B cell (primary cell): ENCODE measurements at regions of chr12 and their contacts with region 1.

Region 1: GRCh38 chr12:57487597-57488401 is at the start of gene MARS1:
- DNase-seq: peak; percentile 96
- ATAC-seq: peak; percentile 98
- H3K4me3 ChIP-seq: peak within 1 kb of the TSS; percentile 66 to 95 (median 86)
- H3K4me3 Mint-ChIP-seq: peak within 1 kb of the TSS; percentile 89
- H3K27ac ChIP-seq: peak within 1 kb of the TSS; percentile 42 to 86
- H3K27ac Mint-ChIP-seq: peak within 1 kb of the TSS; percentile 93
- H3K4me1 ChIP-seq: peaks cover 20 to 25% of the 10 kb centered on the region in 2 donors
- H3K4me1 Mint-ChIP-seq: peaks cover 31% of the 10 kb centered on the region
- H3K27me3 ChIP-seq: no peaks in the 10 kb centered on the region
- H3K27me3 Mint-ChIP-seq: no peaks in the 10 kb centered on the region
- CTCF ChIP-seq: no peak
- total RNA-seq, gene MARS1: 183 and 193 TPM in 2 replicates

Region 2: GRCh38 chr12:57238854-57239554 is 248.8 kb before region 1 on chr12:
- CTCF ChIA-PET with region 1: no interaction called
- POLR2A ChIA-PET with region 1: no interaction called
- intact Hi-C with region 1: no loop called
- DNase-seq: peak; percentile 93
- ATAC-seq: peak; percentile 46
- H3K4me3 ChIP-seq: peak overlapping the region; percentile 19 to 79 (median 75)
- H3K4me3 Mint-ChIP-seq: peak overlapping the region; percentile 89
- H3K27ac ChIP-seq: no peak overlapping the region
- H3K27ac Mint-ChIP-seq: peak overlapping the region; percentile 92
- H3K4me1 ChIP-seq: peaks cover 92 to 99% of the 10 kb centered on the region in 2 donors
- H3K4me1 Mint-ChIP-seq: peaks cover 92% of the 10 kb centered on the region
- H3K27me3 ChIP-seq: peaks cover 0 to 70% (median 30%) of the 10 kb centered on the region in 4 experiments
- H3K27me3 Mint-ChIP-seq: peaks cover 12% of the 10 kb centered on the region
- CTCF ChIP-seq: peak; percentile 100

Region 3: GRCh38 chr12:57355734-57356133 is 132.1 kb before region 1 on chr12:
- CTCF ChIA-PET with region 1: no interaction called
- POLR2A ChIA-PET with region 1: no interaction called
- intact Hi-C with region 1: no loop called
- DNase-seq: no peak
- ATAC-seq: no peak
- H3K4me3 ChIP-seq: no peak overlapping the region
- H3K4me3 Mint-ChIP-seq: no peak overlapping the region
- H3K27ac ChIP-seq: no peak overlapping the region
- H3K27ac Mint-ChIP-seq: no peak overlapping the region
- H3K4me1 ChIP-seq: no peaks in the 10 kb centered on the region
- H3K4me1 Mint-ChIP-seq: no peaks in the 10 kb centered on the region
- H3K27me3 ChIP-seq: no peaks in the 10 kb centered on the region
- H3K27me3 Mint-ChIP-seq: no peaks in the 10 kb centered on the region
- CTCF ChIP-seq: no peak

Region 4: DNA sequence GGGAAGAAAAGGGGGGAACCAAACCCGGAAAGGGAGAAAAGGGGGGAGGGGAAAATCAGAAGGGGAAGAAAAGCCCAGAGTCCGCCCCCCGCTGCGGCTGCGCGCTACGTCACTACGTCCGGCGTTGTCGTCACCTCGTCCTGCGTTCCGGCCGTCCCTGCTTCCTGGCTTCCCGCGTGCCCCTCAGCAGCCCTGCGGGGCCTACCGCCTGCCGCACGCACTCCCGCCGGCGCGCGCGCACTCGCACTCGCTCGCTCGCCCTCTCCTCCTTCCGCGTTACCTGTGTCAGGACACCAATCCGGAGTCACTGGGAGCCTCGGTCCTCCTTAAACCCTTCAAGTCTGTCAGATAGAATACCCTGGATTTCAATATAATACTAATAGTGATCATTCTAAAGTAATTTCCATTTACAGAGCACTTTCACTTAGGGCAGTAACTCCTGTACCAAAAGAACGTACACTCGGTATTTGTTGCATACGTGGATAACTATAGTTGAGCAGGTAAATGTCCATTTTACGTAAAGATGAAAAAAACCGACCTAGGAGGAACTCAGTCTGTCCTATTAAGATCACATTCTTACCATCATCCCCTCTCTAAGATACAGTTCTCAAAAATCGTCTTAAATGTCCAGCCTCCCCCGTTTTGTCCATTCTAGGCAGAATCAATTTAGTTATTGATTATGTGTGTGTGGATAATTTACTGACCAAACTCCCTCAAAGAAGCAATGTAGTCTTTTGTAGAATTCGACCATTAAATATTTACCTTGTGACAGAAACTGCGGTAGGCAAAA is 56.7 kb before region 1 on chr12 and contains the start of gene R3HDM2:
- CTCF ChIA-PET with region 1: no interaction called
- POLR2A ChIA-PET with region 1: interaction called, 10 read pairs
- intact Hi-C with region 1: loop called (anchors 2 kb)
- DNase-seq: peak; percentile 97
- ATAC-seq: peak; percentile 91
- H3K4me3 ChIP-seq: peak within 1 kb of the TSS; percentile 60 to 94 (median 64)
- H3K4me3 Mint-ChIP-seq: peak within 1 kb of the TSS; percentile 99
- H3K27ac ChIP-seq: peak within 1 kb of the TSS; percentile 96
- H3K27ac Mint-ChIP-seq: peak within 1 kb of the TSS; percentile 99
- H3K4me1 ChIP-seq: peaks cover 13 to 19% of the 10 kb centered on the region in 2 donors
- H3K4me1 Mint-ChIP-seq: peaks cover 41% of the 10 kb centered on the region
- H3K27me3 ChIP-seq: no peaks in the 10 kb centered on the region
- H3K27me3 Mint-ChIP-seq: no peaks in the 10 kb centered on the region
- CTCF ChIP-seq: no peak
- total RNA-seq, gene R3HDM2: 129 TPM in 2 replicates

Region 5: GRCh38 chr12:57476162-57476992 is 11.4 kb before region 1 on chr12:
- CTCF ChIA-PET with region 1: interaction called, 15 read pairs
- POLR2A ChIA-PET with region 1: interaction called, 4 read pairs
- intact Hi-C with region 1: loop called (anchors 1 kb)
- DNase-seq: peak; percentile 65
- ATAC-seq: peak; percentile 25
- H3K4me3 ChIP-seq: peak overlapping the region; percentile 78 to 94 (median 85)
- H3K4me3 Mint-ChIP-seq: peak overlapping the region; percentile 99
- H3K27ac ChIP-seq: peak overlapping the region; percentile 91 to 99
- H3K27ac Mint-ChIP-seq: peak overlapping the region; percentile 98
- H3K4me1 ChIP-seq: peaks cover 63 to 84% of the 10 kb centered on the region in 2 donors
- H3K4me1 Mint-ChIP-seq: peaks cover 81% of the 10 kb centered on the region
- H3K27me3 ChIP-seq: no peaks in the 10 kb centered on the region
- H3K27me3 Mint-ChIP-seq: no peaks in the 10 kb centered on the region
- CTCF ChIP-seq: peak; percentile 87

Region 6: GRCh38 chr12:57546438-57547383 is 58.9 kb after region 1 on chr12 and contains the start of gene DCTN2:
- CTCF ChIA-PET with region 1: no interaction called
- POLR2A ChIA-PET with region 1: no interaction called
- intact Hi-C with region 1: loop called (anchors 1 kb)
- DNase-seq: peak; percentile 94
- ATAC-seq: peak; percentile 97
- H3K4me3 ChIP-seq: peak within 1 kb of the TSS; percentile 68 to 96 (median 85)
- H3K4me3 Mint-ChIP-seq: peak within 1 kb of the TSS; percentile 99
- H3K27ac ChIP-seq: peak within 1 kb of the TSS; percentile 58 to 90
- H3K27ac Mint-ChIP-seq: peak within 1 kb of the TSS; percentile 87
- H3K4me1 ChIP-seq: peaks cover 21 to 27% of the 10 kb centered on the region in 2 donors
- H3K4me1 Mint-ChIP-seq: peaks cover 51% of the 10 kb centered on the region
- H3K27me3 ChIP-seq: peaks cover 0 to 26% (median 10%) of the 10 kb centered on the region in 4 experiments
- H3K27me3 Mint-ChIP-seq: peaks cover 18% of the 10 kb centered on the region
- CTCF ChIP-seq: no peak
- total RNA-seq, gene DCTN2: 94.3 and 97.6 TPM in 2 replicates